ENCODE measurements at regions of chr2 and their contacts with region 1.

Region 1: GRCh38 chr2:118882709-118883210 is 35.3 kb upstream of the EN1 start:
- DNase-seq: peak; percentile 45 to 59 (median 50)
- ATAC-seq: peak; percentile 93
- H3K4me3 ChIP-seq: no peak overlapping the region
- H3K27ac ChIP-seq: no peak overlapping the region
- H3K4me1 ChIP-seq: no peaks in the 10 kb centered on the region
- H3K27me3 ChIP-seq: peaks cover 0 to 9% of the 10 kb centered on the region in 2 experiments; a peak in 3 of 5 replicates
- CTCF ChIP-seq: peak; percentile 82 to 89 (median 86)
- EP300 ChIP-seq: no peak
- POLR2A ChIP-seq: no peak
- RAD21 ChIP-seq: peak; percentile 75 to 76

Region 2: DNA sequence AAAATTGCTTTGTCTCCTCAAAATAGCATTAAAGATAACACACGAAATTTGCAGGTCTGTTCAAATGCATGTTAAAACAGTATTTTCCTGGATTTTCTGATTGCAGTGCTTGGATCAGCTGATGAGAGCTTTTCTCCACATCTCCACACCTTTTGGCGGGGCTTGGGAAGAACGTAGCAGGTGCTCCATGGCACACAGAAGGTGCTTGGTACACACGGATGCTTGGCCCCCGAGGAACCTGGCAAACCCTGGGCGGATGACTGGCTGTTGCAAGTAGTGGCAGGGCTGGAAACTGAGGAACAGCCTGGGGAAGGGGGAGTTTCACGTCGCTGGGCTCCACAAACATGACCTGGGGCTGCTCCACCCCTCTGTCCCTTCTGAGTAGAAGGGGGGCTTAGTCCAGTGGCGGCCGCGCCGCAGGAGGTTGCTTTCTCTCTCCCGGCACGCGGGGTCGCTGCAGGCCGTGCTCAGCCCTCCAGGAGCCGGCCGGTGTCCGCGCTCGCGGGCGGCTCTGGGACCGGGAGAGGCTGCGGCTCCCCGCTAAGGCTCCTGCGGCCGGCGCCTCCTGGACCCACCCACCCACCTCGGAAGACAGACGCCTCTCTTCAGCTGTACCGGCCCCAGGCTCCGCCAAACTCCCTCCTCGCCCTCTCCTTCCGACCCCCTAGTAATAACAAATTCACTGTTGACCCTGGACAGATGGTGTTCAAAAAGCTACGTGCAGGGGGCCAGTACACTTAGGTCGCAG is 128.6 kb after region 1 on chr2:
- CTCF ChIA-PET with region 1: no interaction called
- POLR2A ChIA-PET with region 1: no interaction called
- in situ Hi-C with region 1: no loop called
- intact Hi-C with region 1: loop called (anchors 2 kb)
- DNase-seq: peak; percentile 55 to 73 (median 65)
- ATAC-seq: peak; percentile 98
- H3K4me3 ChIP-seq: no peak overlapping the region
- H3K27ac ChIP-seq: no peak overlapping the region
- H3K4me1 ChIP-seq: no peaks in the 10 kb centered on the region
- H3K27me3 ChIP-seq: peaks cover 5 to 49% of the 10 kb centered on the region in 2 experiments; a peak in 4 of 5 replicates
- CTCF ChIP-seq: peak; percentile 58 to 80 (median 67)
- EP300 ChIP-seq: no peak
- POLR2A ChIP-seq: no peak
- RAD21 ChIP-seq: peak; percentile 55 to 70

Region 3: DNA sequence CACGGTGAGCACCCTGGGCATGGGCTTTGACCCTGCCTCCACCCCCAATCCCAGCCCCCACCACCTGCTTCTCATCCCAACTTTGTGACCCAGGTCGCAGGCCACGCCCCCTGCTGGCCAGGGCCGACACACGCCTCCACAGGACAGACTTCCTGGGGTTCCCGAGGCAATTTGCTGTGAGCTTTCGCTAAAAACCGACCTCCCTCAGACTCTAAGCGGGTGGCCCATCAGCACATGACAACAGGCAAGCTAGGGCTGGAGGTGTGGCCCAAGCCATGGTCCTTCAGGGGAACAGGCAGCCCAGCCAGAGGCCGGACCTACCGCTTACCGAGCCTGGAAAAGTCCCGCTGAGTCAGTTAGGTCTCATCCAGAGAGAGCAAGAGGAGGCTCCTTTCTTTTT is 243.9 kb after region 1 on chr2:
- CTCF ChIA-PET with region 1: interaction called, 3 read pairs
- POLR2A ChIA-PET with region 1: no interaction called
- in situ Hi-C with region 1: no loop called
- intact Hi-C with region 1: loop called (anchors 5 kb)
- DNase-seq: peak; percentile 76 to 88 (median 84)
- ATAC-seq: peak; percentile 95
- H3K4me3 ChIP-seq: no peak overlapping the region
- H3K27ac ChIP-seq: no peak overlapping the region
- H3K4me1 ChIP-seq: peaks cover 0 to 4% of the 10 kb centered on the region in 2 experiments; a peak in 2 of 5 replicates
- H3K27me3 ChIP-seq: peaks cover 12 to 52% of the 10 kb centered on the region in 2 experiments
- CTCF ChIP-seq: peak; percentile 69 to 80 (median 78)
- EP300 ChIP-seq: no peak
- POLR2A ChIP-seq: no peak
- RAD21 ChIP-seq: peak; percentile 18 to 47; a peak in 2 of 4 replicates

Region 4: GRCh38 chr2:119174216-119175037 is 291.7 kb after region 1 on chr2:
- CTCF ChIA-PET with region 1: no interaction called
- POLR2A ChIA-PET with region 1: no interaction called
- in situ Hi-C with region 1: no loop called
- intact Hi-C with region 1: loop called (anchors 1 kb)
- DNase-seq: peak; percentile 64 to 79 (median 73)
- ATAC-seq: peak; percentile 95
- H3K4me3 ChIP-seq: no peak overlapping the region
- H3K27ac ChIP-seq: no peak overlapping the region
- H3K4me1 ChIP-seq: peaks cover 3 to 17% of the 10 kb centered on the region in 2 experiments; a peak in 3 of 5 replicates
- H3K27me3 ChIP-seq: peaks cover 0 to 23% of the 10 kb centered on the region in 2 experiments; a peak in 2 of 5 replicates
- CTCF ChIP-seq: peak; percentile 81 to 90 (median 86)
- EP300 ChIP-seq: no peak
- POLR2A ChIP-seq: no peak
- RAD21 ChIP-seq: peak; percentile 40 to 61

Region 5: DNA sequence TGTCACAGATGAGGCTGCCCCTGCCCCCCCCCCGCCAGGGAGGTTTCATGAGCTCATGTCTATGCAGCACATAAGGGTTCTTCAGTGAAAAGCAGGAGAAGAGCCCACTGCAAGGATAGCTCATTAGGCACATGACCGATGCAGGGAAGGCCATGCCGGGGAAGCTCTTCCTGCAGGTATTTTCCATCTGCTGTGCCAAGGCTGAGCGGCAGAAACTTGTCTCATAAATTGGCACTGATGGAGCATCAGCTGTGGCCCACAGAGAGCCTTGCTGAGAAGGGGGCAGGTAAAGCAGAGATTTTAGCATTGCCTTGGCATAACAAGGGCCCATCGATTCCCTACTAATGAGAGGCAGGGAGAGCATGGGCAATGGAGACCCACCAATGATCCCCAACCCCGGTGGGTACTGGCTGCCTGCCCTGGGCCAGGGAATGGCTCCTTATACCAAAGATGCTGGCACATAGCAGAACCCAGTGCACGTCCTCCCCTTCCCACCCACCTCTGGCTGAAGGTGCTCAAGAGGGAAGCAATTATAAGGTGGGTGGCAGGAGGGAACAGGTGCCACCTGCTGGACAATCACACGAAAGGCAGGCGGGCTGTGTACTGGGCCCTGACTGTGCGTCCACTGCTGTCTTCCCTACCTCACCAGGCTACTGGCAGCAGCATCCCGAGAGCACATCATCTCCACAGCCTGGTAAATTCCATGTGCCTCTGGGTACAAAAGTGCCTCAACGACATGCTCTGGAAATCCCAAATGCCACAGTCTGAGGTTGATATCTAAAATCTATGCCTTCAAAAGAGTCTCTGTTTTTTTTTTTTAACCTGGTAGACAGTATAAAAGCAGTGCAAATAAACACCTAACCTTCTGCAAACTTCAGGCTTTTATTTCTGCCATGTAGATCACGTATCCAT is 382.3 kb after region 1 on chr2:
- CTCF ChIA-PET with region 1: no interaction called
- POLR2A ChIA-PET with region 1: no interaction called
- in situ Hi-C with region 1: no loop called
- intact Hi-C with region 1: loop called (anchors 10 kb)
- DNase-seq: peak; percentile 64 to 73 (median 68)
- ATAC-seq: peak; percentile 99
- H3K4me3 ChIP-seq: no peak overlapping the region
- H3K27ac ChIP-seq: no peak overlapping the region
- H3K4me1 ChIP-seq: peaks cover 2 to 7% of the 10 kb centered on the region in 2 experiments; a peak in 3 of 5 replicates
- H3K27me3 ChIP-seq: no peaks in the 10 kb centered on the region
- CTCF ChIP-seq: peak; percentile 76 to 85 (median 79)
- EP300 ChIP-seq: no peak
- POLR2A ChIP-seq: no peak
- RAD21 ChIP-seq: peak; percentile 61 to 75

Region 6: DNA sequence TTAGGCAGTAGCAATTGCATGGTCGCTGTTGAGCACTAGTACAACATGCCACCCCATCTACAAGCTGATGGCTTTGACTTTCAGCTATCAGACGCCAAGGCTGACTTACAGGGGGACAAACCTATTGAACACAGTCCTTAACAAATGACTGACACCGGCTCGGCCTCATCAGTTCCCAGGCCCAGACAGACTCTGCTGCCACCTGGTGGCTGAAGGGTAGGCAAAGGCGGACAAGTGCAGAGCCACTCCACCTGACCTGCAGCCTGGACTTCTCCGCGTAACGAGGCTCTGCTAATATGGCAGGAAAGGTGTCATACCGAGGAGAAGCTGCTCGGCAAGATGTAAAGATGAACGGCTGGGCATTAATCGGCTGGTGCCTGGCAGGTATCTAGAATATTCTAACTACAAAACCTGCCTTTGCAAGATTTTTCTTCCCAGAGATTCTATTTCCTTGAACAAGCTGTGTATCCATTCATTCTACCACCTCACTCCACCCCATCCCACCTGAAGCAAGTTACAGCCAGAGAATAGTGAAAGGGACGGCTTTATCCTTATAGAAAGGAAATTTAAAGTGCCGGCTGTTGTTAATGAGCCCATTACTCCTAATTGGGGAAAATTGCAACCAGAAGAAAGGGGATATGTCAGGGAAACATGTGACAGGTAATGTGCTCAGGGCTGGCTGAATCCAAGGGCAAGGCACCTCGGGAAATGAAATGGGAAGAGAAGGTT is 408.3 kb after region 1 on chr2:
- CTCF ChIA-PET with region 1: no interaction called
- POLR2A ChIA-PET with region 1: no interaction called
- in situ Hi-C with region 1: loop called (anchors 25 kb)
- intact Hi-C with region 1: loop called (anchors 5 kb)
- DNase-seq: peak; percentile 62 to 74 (median 67)
- ATAC-seq: peak; percentile 97
- H3K4me3 ChIP-seq: no peak overlapping the region
- H3K27ac ChIP-seq: no peak overlapping the region
- H3K4me1 ChIP-seq: no peaks in the 10 kb centered on the region; a peak in 1 of 5 replicates
- H3K27me3 ChIP-seq: peaks cover 32 to 58% of the 10 kb centered on the region in 2 experiments
- CTCF ChIP-seq: peak; percentile 79 to 83 (median 82)
- EP300 ChIP-seq: no peak
- POLR2A ChIP-seq: no peak
- RAD21 ChIP-seq: peak; percentile 65 to 89